ENCODE measurements at regions of chr19 and their contacts with region 1.

Region 1: DNA sequence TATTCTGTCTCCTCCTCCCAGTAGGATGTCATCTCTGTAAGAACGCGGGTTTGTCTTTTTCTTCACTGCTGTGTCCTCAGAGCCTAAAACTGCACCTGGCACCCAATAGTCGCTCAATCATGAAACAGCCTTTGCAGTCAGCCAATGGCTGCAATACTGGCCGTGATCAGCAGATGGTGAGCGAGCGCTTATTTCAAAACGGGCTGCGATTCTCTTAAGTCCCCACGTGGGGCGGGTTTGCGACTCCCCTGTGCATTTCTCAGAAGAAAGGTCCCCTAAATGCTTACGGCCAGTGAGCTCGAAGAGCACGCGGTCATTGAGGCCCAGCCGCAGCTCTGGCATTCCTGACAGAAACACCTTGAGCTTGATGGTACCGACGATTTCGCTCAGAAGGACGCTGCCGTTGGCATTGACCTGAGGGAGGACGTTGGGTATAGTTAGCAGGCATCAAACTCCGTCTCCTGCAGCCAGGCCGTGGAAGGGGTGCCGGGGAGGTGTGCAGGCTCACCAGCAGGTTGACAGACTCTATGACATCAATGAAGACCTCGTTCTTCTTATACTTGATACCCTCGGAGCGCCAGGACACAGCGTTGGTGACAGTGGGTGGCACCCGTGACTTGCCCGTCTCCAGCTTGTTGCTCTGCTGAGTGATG is 6.0 kb downstream of the AP1M2 start:
- DNase-seq: peak; percentile 86
- H3K4me3 ChIP-seq: peak overlapping the region in 1 of 2 experiments; percentile 6; a peak in 1 of 4 replicates
- H3K27ac ChIP-seq: no peak overlapping the region
- H3K4me1 ChIP-seq: peaks cover 0 to 3% of the 10 kb centered on the region in 2 experiments; a peak in 1 of 4 replicates
- H3K27me3 ChIP-seq: no peaks in the 10 kb centered on the region
- CTCF ChIP-seq: peak; percentile 97
- EP300 ChIP-seq: no peak
- RAD21 ChIP-seq: peak; percentile 98

Region 2: DNA sequence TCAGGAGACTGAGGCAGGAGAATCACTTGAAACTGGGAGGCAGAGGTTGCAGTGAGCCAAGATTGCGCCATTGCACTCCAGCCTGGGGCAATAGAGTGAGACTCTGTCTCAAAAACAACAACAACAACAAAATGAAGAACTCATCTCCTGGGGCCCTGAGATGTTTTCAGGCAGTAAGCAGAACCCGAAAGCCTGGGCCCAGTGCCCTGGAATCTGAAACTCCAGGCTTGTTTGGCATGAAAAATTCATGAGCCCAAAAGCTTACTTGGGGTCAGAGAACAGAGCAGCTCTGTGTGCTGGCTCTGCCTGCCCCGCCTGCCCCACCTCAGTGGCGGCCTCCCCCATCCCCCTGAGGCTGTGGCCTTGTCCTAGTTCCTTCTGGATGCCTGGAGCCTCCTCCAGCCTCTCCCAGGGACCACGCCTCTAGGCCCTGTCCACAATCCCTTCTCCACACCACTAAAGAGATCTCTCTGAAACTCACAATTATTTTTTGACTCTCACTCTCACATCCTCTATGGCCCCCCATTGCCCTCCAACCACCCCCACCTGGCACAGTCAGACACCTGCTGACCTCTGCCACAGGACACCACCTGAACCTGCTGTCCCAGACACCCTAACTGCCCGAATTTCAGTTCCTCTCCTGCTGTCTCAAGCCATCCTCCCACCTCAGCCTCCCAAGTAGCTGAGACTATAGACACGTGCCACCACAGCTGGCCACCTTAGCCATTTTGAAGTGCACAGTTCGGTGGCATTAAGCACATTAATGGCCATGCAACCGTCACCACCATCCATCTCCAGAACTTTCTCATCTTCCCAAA is 12.9 kb after region 1 on chr19:
- CTCF ChIA-PET with region 1: interaction called, 51 read pairs
- POLR2A ChIA-PET with region 1: no interaction called
- DNase-seq: no peak
- H3K4me3 ChIP-seq: no peak overlapping the region
- H3K27ac ChIP-seq: no peak overlapping the region
- H3K4me1 ChIP-seq: no peaks in the 10 kb centered on the region
- H3K27me3 ChIP-seq: no peaks in the 10 kb centered on the region; the same call in 1 of the 2 replicates
- CTCF ChIP-seq: no peak
- EP300 ChIP-seq: no peak
- RAD21 ChIP-seq: no peak

Region 3: DNA sequence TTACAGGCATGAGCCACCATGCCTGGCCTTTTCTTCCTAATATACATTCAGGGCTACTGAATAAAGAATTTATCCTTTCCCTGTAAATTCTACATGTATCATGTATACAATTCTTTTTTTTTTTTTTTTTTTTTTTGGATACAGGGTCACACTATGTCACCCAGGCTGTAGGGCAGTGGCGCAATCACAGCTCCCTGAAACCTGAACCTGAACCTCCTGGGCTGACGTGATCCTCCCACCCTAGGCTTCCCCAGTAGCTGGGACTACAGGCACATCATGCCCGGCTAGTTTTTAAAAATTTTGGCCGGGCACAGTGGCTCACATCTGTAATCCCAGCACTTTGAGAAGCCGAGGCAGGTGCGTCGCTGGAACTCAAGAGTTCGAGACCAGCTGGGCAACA is 37.7 kb after region 1 on chr19:
- CTCF ChIA-PET with region 1: interaction called, 18 read pairs
- POLR2A ChIA-PET with region 1: no interaction called
- DNase-seq: no peak
- H3K4me3 ChIP-seq: no peak overlapping the region
- H3K27ac ChIP-seq: peak overlapping the region in 1 of 2 experiments; percentile 66; a peak in 1 of 4 replicates
- H3K4me1 ChIP-seq: no peaks in the 10 kb centered on the region; a peak in 1 of 4 replicates
- H3K27me3 ChIP-seq: no peaks in the 10 kb centered on the region
- CTCF ChIP-seq: no peak
- EP300 ChIP-seq: no peak
- RAD21 ChIP-seq: no peak

Region 4: DNA sequence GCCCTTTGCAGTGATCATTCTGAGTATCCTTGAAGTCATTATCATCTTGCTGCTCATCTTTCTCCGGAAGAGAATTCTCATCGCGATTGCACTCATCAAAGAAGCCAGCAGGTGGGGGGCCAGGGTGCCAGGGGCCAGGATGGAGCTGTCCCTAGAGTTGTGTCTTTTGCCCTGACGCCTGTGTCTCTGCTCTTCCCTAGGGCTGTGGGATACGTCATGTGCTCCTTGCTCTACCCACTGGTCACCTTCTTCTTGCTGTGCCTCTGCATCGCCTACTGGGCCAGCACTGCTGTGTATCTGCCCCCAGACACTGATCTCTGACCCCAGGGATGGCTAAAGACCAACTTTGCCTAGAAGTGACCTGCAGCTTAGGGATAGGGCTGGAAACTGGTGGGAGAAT is 53.9 kb after region 1 on chr19:
- CTCF ChIA-PET with region 1: interaction called, 330 read pairs
- POLR2A ChIA-PET with region 1: no interaction called
- DNase-seq: no peak
- H3K4me3 ChIP-seq: no peak overlapping the region
- H3K27ac ChIP-seq: no peak overlapping the region
- H3K4me1 ChIP-seq: no peaks in the 10 kb centered on the region
- H3K27me3 ChIP-seq: no peaks in the 10 kb centered on the region
- CTCF ChIP-seq: no peak; the same call in 1 of the 2 replicates
- EP300 ChIP-seq: no peak
- RAD21 ChIP-seq: no peak

Region 5: GRCh38 chr19:10670182-10670581 is 89.1 kb after region 1 on chr19:
- CTCF ChIA-PET with region 1: interaction called, 15 read pairs
- POLR2A ChIA-PET with region 1: no interaction called
- DNase-seq: no peak
- H3K4me3 ChIP-seq: no peak overlapping the region
- H3K27ac ChIP-seq: no peak overlapping the region
- H3K4me1 ChIP-seq: no peaks in the 10 kb centered on the region
- H3K27me3 ChIP-seq: no peaks in the 10 kb centered on the region
- CTCF ChIP-seq: no peak
- EP300 ChIP-seq: no peak
- RAD21 ChIP-seq: no peak

Region 6: GRCh38 chr19:10690341-10690781 is 109.3 kb after region 1 on chr19:
- CTCF ChIA-PET with region 1: interaction called, 163 read pairs
- POLR2A ChIA-PET with region 1: interaction called, 4 read pairs
- DNase-seq: no peak
- H3K4me3 ChIP-seq: no peak overlapping the region
- H3K27ac ChIP-seq: no peak overlapping the region
- H3K4me1 ChIP-seq: peaks cover 0 to 7% of the 10 kb centered on the region in 2 experiments; a peak in 1 of 4 replicates
- H3K27me3 ChIP-seq: no peaks in the 10 kb centered on the region
- CTCF ChIP-seq: no peak
- EP300 ChIP-seq: no peak
- RAD21 ChIP-seq: no peak

Measured in SK-N-SH (cell line).